Colonic mucosa (tissue), 4 donors: ENCODE measurements at regions of chr1 and their contacts with region 1.

Region 1: GRCh38 chr1:85307987-85308832 is 31.8 kb upstream of the BCL10 start:
- DNase-seq: peak; percentile 89
- H3K4me3 ChIP-seq: no peak overlapping the region
- H3K27ac ChIP-seq: no peak overlapping the region
- H3K4me1 ChIP-seq: no peaks in the 10 kb centered on the region
- H3K27me3 ChIP-seq: no peaks in the 10 kb centered on the region
- CTCF ChIP-seq: peak; percentile 88

Region 2: GRCh38 chr1:85438353-85438752 is 130.1 kb after region 1 on chr1:
- intact Hi-C with region 1: no loop called
- DNase-seq: no peak
- H3K4me3 ChIP-seq: no peak overlapping the region
- H3K27ac ChIP-seq: no peak overlapping the region
- H3K4me1 ChIP-seq: no peaks in the 10 kb centered on the region
- H3K27me3 ChIP-seq: no peaks in the 10 kb centered on the region
- CTCF ChIP-seq: no peak

Region 3: GRCh38 chr1:85448358-85448757 is 140.1 kb after region 1 on chr1:
- intact Hi-C with region 1: no loop called
- DNase-seq: no peak
- H3K4me3 ChIP-seq: no peak overlapping the region
- H3K27ac ChIP-seq: no peak overlapping the region
- H3K4me1 ChIP-seq: no peaks in the 10 kb centered on the region
- H3K27me3 ChIP-seq: no peaks in the 10 kb centered on the region
- CTCF ChIP-seq: no peak

Region 4: DNA sequence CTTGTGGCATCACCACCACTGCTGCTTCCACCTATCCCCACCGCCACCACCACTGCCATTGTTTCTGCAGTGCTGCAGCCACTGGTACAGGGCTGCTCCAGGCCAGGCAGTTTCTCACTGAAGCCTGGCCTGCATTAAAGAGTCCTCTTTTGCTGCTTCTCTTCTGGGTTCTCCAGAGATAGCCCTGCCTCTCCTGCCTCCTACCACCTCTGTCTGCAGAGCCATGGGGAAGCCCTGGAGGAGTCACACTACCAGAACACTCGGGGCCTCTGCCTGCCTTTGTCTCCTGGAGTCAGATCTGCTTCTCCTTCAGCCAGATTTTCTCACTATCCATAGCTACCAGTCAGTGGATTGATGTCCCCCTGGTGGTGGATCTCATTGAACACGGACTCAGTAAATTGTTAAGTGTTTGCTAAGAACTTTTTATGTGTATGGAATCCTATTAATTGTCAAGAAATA is 194.4 kb after region 1 on chr1:
- intact Hi-C with region 1: loop called (anchors 2 kb)
- DNase-seq: peak; percentile 65
- H3K4me3 ChIP-seq: no peak overlapping the region
- H3K27ac ChIP-seq: no peak overlapping the region
- H3K4me1 ChIP-seq: no peaks in the 10 kb centered on the region
- H3K27me3 ChIP-seq: no peaks in the 10 kb centered on the region
- CTCF ChIP-seq: peak; percentile 52

Region 5: GRCh38 chr1:85580872-85581801 is 272.9 kb after region 1 on chr1:
- intact Hi-C with region 1: loop called (anchors 5 kb)
- DNase-seq: peak; percentile 85
- H3K4me3 ChIP-seq: peak overlapping the region; percentile 69
- H3K27ac ChIP-seq: peak overlapping the region; percentile 80
- H3K4me1 ChIP-seq: no peaks in the 10 kb centered on the region
- H3K27me3 ChIP-seq: peaks cover 16% of the 10 kb centered on the region
- CTCF ChIP-seq: peak; percentile 65

Region 6: GRCh38 chr1:85599076-85599491 is 290.9 kb after region 1 on chr1:
- intact Hi-C with region 1: no loop called
- DNase-seq: no peak
- H3K4me3 ChIP-seq: no peak overlapping the region
- H3K27ac ChIP-seq: no peak overlapping the region
- H3K4me1 ChIP-seq: no peaks in the 10 kb centered on the region
- H3K27me3 ChIP-seq: no peaks in the 10 kb centered on the region
- CTCF ChIP-seq: no peak

Region 7: DNA sequence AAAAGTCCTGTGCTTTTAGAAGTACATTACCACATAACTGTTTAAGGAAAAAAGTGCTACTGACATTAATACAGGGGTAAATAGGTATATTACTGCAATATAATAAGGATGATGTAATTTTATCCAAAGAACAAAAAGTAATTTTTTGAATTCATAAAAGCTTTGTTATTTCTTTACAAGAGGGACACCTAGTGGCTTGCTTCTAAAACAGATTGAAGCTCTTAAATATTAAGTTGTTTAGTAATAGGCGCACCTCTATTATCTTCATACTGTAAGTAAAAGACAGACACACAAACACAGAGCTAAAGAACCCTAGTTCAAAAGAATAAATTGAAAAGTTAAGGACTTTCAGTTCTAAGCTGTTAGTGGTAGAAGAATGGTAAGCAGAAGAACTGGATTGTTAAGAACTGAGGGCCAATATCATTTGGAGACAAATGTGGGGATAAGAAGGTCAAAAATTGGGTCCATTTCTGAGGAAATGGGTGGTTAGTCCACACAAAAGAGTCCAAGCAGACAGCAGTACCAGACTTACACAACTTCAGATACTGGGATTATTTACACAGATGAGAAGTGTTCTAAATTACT is 384.6 kb after region 1 on chr1:
- intact Hi-C with region 1: loop called (anchors 5 kb)
- DNase-seq: no peak
- H3K4me3 ChIP-seq: no peak overlapping the region
- H3K27ac ChIP-seq: no peak overlapping the region
- H3K4me1 ChIP-seq: no peaks in the 10 kb centered on the region
- H3K27me3 ChIP-seq: no peaks in the 10 kb centered on the region
- CTCF ChIP-seq: peak; percentile 28

Region 8: GRCh38 chr1:86018283-86018923 is 710.2 kb after region 1 on chr1:
- intact Hi-C with region 1: loop called (anchors 5 kb)
- DNase-seq: no peak
- H3K4me3 ChIP-seq: no peak overlapping the region
- H3K27ac ChIP-seq: no peak overlapping the region
- H3K4me1 ChIP-seq: no peaks in the 10 kb centered on the region
- H3K27me3 ChIP-seq: no peaks in the 10 kb centered on the region
- CTCF ChIP-seq: peak; percentile 62